ENCODE measurements at regions of chr1 and their contacts with region 1.

Region 1: GRCh38 chr1:40373338-40374283 is at the start of gene SMAP2:
- DNase-seq: peak; percentile 97
- ATAC-seq: peak; percentile 87
- H3K4me3 Mint-ChIP-seq: peak within 1 kb of the TSS; percentile 99
- H3K27ac Mint-ChIP-seq: peak within 1 kb of the TSS; percentile 99
- H3K4me1 Mint-ChIP-seq: peaks cover 33% of the 10 kb centered on the region
- H3K27me3 Mint-ChIP-seq: no peaks in the 10 kb centered on the region
- total RNA-seq, gene SMAP2: 133 to 138 TPM

Region 2: GRCh38 chr1:40385437-40386358 is 12.1 kb after region 1 on chr1:
- POLR2A ChIA-PET with region 1: interaction called, 175 read pairs
- DNase-seq: no peak
- ATAC-seq: peak; percentile 55
- H3K4me3 Mint-ChIP-seq: peak overlapping the region; percentile 85
- H3K27ac Mint-ChIP-seq: peak overlapping the region; percentile 98
- H3K4me1 Mint-ChIP-seq: peaks cover 84% of the 10 kb centered on the region
- H3K27me3 Mint-ChIP-seq: no peaks in the 10 kb centered on the region

Region 3: DNA sequence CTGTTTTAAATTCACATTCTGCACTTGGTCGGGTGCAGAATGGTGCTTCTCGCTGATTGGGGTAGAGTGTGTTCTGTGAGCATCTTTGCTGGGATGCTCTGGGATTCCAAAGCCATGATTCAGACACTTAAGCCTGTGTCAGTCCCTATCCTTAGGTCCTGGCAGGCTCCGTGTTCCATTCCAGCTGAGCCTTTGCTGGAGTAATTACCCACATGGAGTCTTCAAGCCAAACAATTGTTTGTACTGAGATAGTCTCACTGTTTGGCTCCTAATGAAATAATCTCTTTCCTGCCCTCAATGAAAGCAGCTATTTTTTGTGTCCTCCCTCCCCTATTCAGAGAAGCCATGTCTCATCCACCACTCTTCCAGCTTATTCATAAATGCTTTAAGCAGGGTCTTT is 18.6 kb after region 1 on chr1:
- POLR2A ChIA-PET with region 1: interaction called, 175 read pairs
- DNase-seq: no peak
- ATAC-seq: no peak
- H3K4me3 Mint-ChIP-seq: no peak overlapping the region
- H3K27ac Mint-ChIP-seq: peak overlapping the region; percentile 67
- H3K4me1 Mint-ChIP-seq: peaks cover 75% of the 10 kb centered on the region
- H3K27me3 Mint-ChIP-seq: no peaks in the 10 kb centered on the region

Region 4: DNA sequence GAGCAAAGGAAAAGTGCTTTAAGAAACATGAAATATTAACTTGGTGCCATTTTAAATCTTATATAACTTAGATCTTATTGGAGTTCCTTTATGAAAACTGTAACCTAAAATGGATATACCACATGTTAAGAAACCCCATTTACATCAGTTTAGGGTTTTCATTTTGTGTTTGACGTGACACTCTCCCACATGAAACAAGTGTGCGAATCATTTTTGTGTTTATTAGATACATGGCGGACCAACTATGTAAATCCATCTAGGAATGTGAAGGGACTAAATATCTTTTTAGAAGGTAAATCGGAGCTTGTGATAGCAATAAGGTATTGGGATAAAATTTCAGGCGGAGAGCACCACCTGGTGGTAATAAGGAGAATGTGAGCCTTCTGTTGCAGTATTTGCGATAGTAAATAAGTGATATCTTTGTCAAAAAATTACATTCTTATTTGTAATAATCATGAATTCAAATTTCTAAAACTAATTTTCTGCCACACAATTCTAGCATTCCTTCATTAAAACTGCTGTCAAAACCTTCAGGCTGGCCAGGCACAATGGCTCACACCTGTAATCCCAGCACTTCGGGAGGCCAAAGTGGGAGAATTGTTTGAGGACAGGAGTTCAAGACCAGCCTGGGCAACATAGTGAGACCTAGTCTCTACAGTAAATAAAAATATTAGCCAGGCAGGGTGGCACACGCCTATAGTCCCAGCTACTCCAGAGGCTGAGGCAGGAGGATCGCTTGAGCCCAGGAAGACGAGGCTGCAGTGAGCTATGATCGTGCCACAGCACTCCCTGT is 31.3 kb after region 1 on chr1:
- POLR2A ChIA-PET with region 1: interaction called, 13 read pairs
- DNase-seq: no peak
- ATAC-seq: no peak
- H3K4me3 Mint-ChIP-seq: peak overlapping the region; percentile 82
- H3K27ac Mint-ChIP-seq: peak overlapping the region; percentile 92
- H3K4me1 Mint-ChIP-seq: peaks cover 39% of the 10 kb centered on the region
- H3K27me3 Mint-ChIP-seq: no peaks in the 10 kb centered on the region

Region 5: GRCh38 chr1:40612345-40612831 is 238.8 kb after region 1 on chr1:
- POLR2A ChIA-PET with region 1: no interaction called
- DNase-seq: peak; percentile 54
- ATAC-seq: peak; percentile 95
- H3K4me3 Mint-ChIP-seq: no peak overlapping the region
- H3K27ac Mint-ChIP-seq: no peak overlapping the region
- H3K4me1 Mint-ChIP-seq: no peaks in the 10 kb centered on the region
- H3K27me3 Mint-ChIP-seq: peaks cover 3% of the 10 kb centered on the region